ENCODE measurements at regions of chr13 and their contacts with region 1.

Region 1: GRCh38 chr13:40401911-40402776 is 264.3 kb downstream of the FOXO1 start:
- DNase-seq: peak; percentile 55
- H3K4me3 ChIP-seq: no peak overlapping the region
- H3K27ac ChIP-seq: peak overlapping the region; percentile 30 to 56
- H3K4me1 ChIP-seq: peaks cover 7% of the 10 kb centered on the region
- H3K27me3 ChIP-seq: no peaks in the 10 kb centered on the region
- CTCF ChIP-seq: no peak
- POLR2A ChIP-seq: no peak

Region 2: GRCh38 chr13:40271931-40272775 is 130.0 kb before region 1 on chr13:
- intact Hi-C with region 1: loop called (anchors 10 kb)
- DNase-seq: peak; percentile 62
- H3K4me3 ChIP-seq: no peak overlapping the region
- H3K27ac ChIP-seq: peak overlapping the region; percentile 44 to 58
- H3K4me1 ChIP-seq: no peaks in the 10 kb centered on the region
- H3K27me3 ChIP-seq: no peaks in the 10 kb centered on the region
- CTCF ChIP-seq: no peak
- POLR2A ChIP-seq: no peak